ENCODE measurements at regions of chr11 and their contacts with region 1.

Region 1: GRCh38 chr11:121112498-121113455 is 11.7 kb downstream of the TECTA start:
- DNase-seq: peak; percentile 72
- ATAC-seq: peak; percentile 91

Region 2: DNA sequence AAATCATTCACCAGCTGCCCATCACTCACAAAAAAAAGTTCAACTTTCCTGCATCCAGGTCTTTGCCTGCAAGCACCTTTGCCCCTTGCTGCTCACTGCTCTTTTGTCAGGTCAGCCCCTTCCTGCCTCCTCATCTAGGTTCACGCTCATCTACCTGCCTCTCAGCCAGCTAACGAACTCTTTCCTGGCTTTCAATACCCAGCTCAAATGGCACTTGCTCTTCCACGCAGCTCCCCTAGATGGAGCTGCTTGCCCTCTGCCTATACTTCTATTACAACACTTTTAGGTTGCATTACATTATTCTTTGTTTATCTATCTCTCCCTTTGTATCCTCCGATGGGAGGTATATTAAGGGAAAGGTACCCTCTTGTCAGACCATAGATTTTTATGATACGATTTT is 167.7 kb before region 1 on chr11:
- intact Hi-C with region 1: loop called (anchors 10 kb)
- DNase-seq: no peak
- ATAC-seq: no peak

Region 3: GRCh38 chr11:121004206-121004840 is 108.5 kb before region 1 on chr11:
- intact Hi-C with region 1: no loop called
- DNase-seq: no peak
- ATAC-seq: no peak

Region 4: DNA sequence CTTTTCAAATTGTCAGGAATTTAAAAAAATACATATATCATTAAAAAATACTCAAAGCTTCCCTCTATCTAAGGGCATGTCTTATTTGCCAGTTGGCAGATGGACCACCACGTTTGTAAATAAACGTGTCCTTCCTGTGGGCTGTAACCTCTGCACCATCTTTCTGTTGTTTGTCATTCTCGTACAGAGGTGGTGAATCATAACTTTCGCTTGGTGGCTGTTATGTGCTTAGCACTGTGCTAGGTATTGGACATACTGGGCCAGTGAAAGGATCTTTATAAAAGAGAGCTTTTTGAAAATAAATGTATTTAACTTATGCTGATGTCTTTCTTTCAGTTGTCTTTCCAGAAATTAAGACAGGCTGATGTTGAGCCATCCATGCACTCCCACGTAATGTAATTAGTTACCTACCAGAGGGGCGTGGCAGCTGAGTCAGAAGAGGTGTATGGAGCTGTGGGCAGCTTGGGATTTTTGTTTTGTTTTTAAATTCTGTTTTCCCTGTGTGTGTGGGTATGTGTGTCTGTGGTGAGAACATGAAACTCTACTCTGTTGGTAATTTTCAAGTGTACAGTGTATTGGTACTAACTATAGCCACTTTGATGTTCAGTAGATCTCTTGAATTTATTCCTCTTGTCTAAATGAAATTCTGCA is 51.0 kb after region 1 on chr11:
- intact Hi-C with region 1: no loop called
- DNase-seq: no peak
- ATAC-seq: no peak

Region 5: DNA sequence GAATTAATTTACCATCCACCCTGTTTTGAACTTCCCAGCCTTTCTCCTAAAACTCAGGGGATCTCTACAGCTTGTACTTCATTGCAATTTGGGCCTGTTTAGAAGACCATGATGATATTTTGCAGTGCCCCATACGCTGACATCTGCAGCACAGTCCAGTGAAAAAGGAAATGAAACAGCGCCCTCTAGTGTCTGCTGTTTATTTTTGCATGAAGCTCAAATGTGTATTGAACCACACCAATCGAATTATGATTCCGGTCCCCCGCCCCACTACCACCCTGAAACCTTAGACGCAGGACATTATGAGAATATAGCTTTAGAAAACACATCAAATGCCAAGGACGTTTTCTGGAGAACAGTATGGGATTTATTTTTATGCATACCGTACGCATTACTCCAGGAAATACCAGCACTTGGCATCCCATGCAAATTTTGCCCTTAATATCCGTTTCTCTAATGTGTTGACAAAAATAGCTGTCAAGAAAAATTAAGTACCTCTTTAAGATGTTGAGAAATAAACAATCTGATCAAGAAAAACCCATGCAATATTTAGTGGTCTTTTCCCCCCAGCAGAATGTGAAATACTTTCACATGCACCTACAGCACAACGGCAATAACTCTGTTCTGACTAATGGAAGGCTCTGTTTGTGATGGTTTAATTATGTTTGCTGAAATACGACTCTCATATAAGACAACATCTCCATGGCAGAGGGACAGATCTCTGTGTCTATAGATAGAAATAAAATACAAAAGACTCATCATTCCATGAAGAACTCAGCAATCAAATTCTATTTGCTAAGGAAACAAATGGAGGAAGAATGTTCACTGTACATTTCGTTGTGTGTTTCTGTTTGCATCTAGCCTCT is 82.2 kb after region 1 on chr11:
- intact Hi-C with region 1: loop called (anchors 5 kb)
- DNase-seq: no peak
- ATAC-seq: peak; percentile 88

Region 6: GRCh38 chr11:121426476-121427399 is 314.0 kb after region 1 on chr11:
- intact Hi-C with region 1: no loop called
- DNase-seq: peak; percentile 71
- ATAC-seq: peak; percentile 95